WTC11 (cell line): ENCODE measurements at regions of chr1 and their contacts with region 1.

Region 1: DNA sequence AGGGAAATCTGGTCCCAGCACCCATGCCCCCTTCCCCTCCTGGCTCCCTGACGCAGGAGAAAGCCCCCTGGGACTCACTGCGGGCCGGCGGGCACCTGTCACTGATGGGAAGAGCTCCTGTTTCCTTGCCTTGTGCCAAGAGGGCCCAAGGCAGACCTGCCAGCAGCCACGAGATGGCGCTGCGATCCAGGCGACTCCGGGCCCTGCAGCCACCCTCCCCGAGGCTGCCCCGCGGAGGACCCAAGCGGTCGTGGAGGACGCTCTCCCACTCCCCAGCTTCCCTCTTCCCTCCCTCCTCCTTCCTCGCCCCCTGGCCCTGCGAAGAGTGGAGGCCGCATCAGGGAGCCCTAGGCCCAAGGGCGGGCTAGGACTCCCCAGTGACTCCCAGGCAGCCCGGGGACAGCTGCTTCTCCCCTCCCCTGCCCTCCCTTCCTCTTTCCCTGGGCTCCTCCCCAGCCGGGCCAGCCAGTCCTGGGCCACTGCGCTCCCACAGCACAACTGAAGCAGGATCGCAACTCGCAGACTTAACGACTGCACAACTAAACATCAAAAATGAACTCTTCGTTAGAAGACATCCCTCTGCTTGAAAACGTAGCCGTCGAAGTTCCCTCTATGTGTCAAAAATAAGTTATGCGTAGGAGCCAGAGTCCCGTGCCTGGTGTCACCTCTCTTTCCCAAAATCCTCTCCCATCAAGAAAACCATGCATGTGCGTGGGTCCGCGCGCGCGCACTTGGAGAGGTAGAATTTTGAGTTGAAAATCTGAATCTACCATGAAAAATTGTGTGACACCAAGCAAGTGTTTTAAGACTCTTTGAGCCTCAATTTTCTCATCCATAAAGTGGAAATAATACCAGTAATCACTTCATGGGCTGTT is 34.2 kb downstream of the BATF3 start:
- DNase-seq: peak; percentile 93
- ATAC-seq: peak; percentile 94
- H3K4me3 Mint-ChIP-seq: peak overlapping the region; percentile 81
- H3K27ac Mint-ChIP-seq: no peak overlapping the region
- H3K4me1 Mint-ChIP-seq: peaks cover 19% of the 10 kb centered on the region
- H3K27me3 Mint-ChIP-seq: peaks cover 31% of the 10 kb centered on the region
- CTCF ChIP-seq: peak; percentile 81

Region 2: DNA sequence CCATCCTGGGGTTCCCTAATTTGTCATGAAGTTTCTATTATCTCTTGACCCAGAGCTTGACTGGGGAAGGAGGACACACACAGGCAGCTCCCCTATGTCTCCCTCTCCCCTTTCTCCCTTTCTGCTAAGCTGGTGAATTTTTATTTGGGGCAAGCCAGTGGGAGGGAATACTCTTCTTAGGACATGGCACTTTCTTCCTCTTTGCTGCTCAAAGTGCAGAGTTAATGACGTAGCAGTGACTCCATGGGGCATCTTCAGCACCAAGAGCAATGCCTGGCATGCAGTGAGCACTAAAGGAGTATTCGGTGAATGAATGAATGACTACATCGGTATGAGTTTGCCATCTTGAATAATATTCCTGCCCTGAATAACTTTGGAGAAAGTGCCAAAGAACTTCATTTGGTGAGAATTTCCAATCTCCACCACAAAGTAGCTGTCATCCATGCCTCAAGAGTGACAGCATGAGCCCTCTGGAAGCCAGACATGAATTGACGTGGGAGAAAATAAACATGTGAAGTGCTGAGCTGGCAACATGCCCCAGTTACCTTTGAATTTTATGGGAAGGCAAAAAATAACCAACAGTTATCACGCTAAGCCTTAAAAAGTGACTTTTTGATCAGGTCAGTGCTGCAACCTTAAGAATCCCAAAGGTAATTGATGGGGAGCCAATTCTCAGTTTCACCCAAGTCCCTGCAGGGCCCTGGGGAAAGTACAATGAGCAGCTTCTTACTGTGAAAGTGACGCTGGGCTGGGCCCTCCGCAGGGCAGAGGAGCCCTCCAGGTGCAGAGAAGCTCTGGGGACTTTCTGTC is 79.1 kb before region 1 on chr1:
- CTCF ChIA-PET with region 1: interaction called, 14 read pairs
- POLR2A ChIA-PET with region 1: no interaction called
- DNase-seq: no peak
- ATAC-seq: peak; percentile 18; the same call in 1 of the 2 replicates
- H3K4me3 Mint-ChIP-seq: no peak overlapping the region
- H3K27ac Mint-ChIP-seq: no peak overlapping the region
- H3K4me1 Mint-ChIP-seq: peaks cover 27% of the 10 kb centered on the region
- H3K27me3 Mint-ChIP-seq: no peaks in the 10 kb centered on the region
- CTCF ChIP-seq: no peak

Region 3: GRCh38 chr1:212641956-212642355 is 23.5 kb before region 1 on chr1:
- CTCF ChIA-PET with region 1: interaction called, 10 read pairs
- POLR2A ChIA-PET with region 1: no interaction called
- DNase-seq: no peak
- ATAC-seq: no peak
- H3K4me3 Mint-ChIP-seq: no peak overlapping the region
- H3K27ac Mint-ChIP-seq: no peak overlapping the region
- H3K4me1 Mint-ChIP-seq: peaks cover 11% of the 10 kb centered on the region; the same call in 1 of the 2 replicates
- H3K27me3 Mint-ChIP-seq: peaks cover 3% of the 10 kb centered on the region; the same call in 1 of the 2 replicates
- CTCF ChIP-seq: no peak

Region 4: GRCh38 chr1:212691561-212692071 is 26.1 kb after region 1 on chr1:
- CTCF ChIA-PET with region 1: interaction called, 24 read pairs
- POLR2A ChIA-PET with region 1: no interaction called
- DNase-seq: no peak
- ATAC-seq: no peak
- H3K4me3 Mint-ChIP-seq: no peak overlapping the region
- H3K27ac Mint-ChIP-seq: no peak overlapping the region
- H3K4me1 Mint-ChIP-seq: peaks cover 10% of the 10 kb centered on the region
- H3K27me3 Mint-ChIP-seq: peaks cover 10% of the 10 kb centered on the region
- CTCF ChIP-seq: no peak

Region 5: GRCh38 chr1:212749821-212750535 is 84.5 kb after region 1 on chr1:
- CTCF ChIA-PET with region 1: interaction called, 41 read pairs
- POLR2A ChIA-PET with region 1: no interaction called
- DNase-seq: no peak
- ATAC-seq: peak; percentile 61
- H3K4me3 Mint-ChIP-seq: no peak overlapping the region
- H3K27ac Mint-ChIP-seq: peak overlapping the region; percentile 94
- H3K4me1 Mint-ChIP-seq: peaks cover 42% of the 10 kb centered on the region
- H3K27me3 Mint-ChIP-seq: no peaks in the 10 kb centered on the region
- CTCF ChIP-seq: peak; percentile 76

Region 6: DNA sequence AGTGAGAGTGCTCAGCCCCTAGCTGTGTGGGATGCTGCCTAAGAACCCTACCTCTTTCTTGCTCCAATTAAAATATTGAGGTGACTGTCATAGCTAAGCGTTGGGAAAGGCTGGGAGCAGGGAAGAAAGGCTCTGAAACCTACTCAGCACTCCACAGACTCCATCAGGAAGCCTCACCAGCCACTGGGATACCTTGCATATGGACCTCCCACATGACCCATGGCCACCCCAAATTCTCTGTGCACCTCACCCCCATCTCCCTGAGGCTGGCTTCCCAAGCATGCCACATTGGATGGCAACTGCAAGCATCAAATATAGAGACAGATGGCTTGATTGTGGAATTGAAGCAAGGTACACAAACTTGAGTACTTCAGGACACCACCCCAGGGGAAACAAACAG is 234.4 kb after region 1 on chr1:
- CTCF ChIA-PET with region 1: no interaction called
- POLR2A ChIA-PET with region 1: no interaction called
- DNase-seq: no peak
- ATAC-seq: peak; percentile 57
- H3K4me3 Mint-ChIP-seq: no peak overlapping the region
- H3K27ac Mint-ChIP-seq: peak overlapping the region; percentile 81
- H3K4me1 Mint-ChIP-seq: peaks cover 46% of the 10 kb centered on the region
- H3K27me3 Mint-ChIP-seq: no peaks in the 10 kb centered on the region; the same call in 1 of the 2 replicates
- CTCF ChIP-seq: no peak